Activated CD8-positive, alpha-beta T cell treated with anti-CD3 and anti-CD28 coated beads for 36 hours (primary cell): ENCODE measurements at regions of chr10 and their contacts with region 1.

Region 1: DNA sequence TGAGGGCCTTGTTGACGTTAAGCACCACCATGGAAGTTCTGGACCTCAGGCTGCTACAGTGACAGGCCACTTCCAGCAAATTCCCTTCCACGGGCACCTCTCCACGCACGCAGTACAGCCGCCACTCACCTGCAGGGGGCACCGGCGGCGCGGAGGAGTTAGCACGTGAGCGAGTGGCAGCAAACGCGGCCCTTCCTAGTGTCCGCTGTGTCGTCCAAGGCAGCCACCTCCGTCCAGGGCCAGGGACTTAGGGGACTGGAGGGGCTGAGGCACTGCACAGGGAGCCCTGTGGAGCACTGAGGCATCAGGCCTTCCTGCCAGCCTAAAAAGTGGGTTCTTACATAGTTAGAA is 164.4 kb downstream of the SVIL start:
- DNase-seq: peak; percentile 51
- ATAC-seq: peak; percentile 58
- H3K4me3 Mint-ChIP-seq: no peak overlapping the region
- H3K27ac Mint-ChIP-seq: no peak overlapping the region
- H3K4me1 Mint-ChIP-seq: peaks cover 16% of the 10 kb centered on the region
- H3K27me3 Mint-ChIP-seq: no peaks in the 10 kb centered on the region
- CTCF ChIP-seq: peak; percentile 64

Region 2: GRCh38 chr10:29482591-29483431 is 12.5 kb after region 1 on chr10:
- CTCF ChIA-PET with region 1: interaction called, 12 read pairs
- POLR2A ChIA-PET with region 1: no interaction called
- intact Hi-C with region 1: no loop called
- DNase-seq: peak; percentile 86
- ATAC-seq: peak; percentile 88
- H3K4me3 Mint-ChIP-seq: peak overlapping the region; percentile 6
- H3K27ac Mint-ChIP-seq: peak overlapping the region; percentile 80
- H3K4me1 Mint-ChIP-seq: peaks cover 51% of the 10 kb centered on the region
- H3K27me3 Mint-ChIP-seq: no peaks in the 10 kb centered on the region
- CTCF ChIP-seq: no peak